ENCODE measurements at regions of chr19 and their contacts with region 1.

Region 1: GRCh38 chr19:43674596-43674995 is 4.6 kb upstream of the PLAUR start:
- DNase-seq: no peak
- ATAC-seq: no peak
- H3K4me3 ChIP-seq: no peak overlapping the region; the same call in 1 of the 2 replicates
- H3K27ac ChIP-seq: peak overlapping the region; percentile 99
- H3K4me1 ChIP-seq: peaks cover 29% of the 10 kb centered on the region
- H3K27me3 ChIP-seq: no peaks in the 10 kb centered on the region
- CTCF ChIP-seq: no peak

Region 2: GRCh38 chr19:43694553-43694952 is 20.0 kb after region 1 on chr19:
- CTCF ChIA-PET with region 1: no interaction called
- POLR2A ChIA-PET with region 1: interaction called, 13 read pairs
- intact Hi-C with region 1: no loop called
- DNase-seq: no peak
- ATAC-seq: peak; percentile 81
- H3K4me3 ChIP-seq: no peak overlapping the region
- H3K27ac ChIP-seq: no peak overlapping the region
- H3K4me1 ChIP-seq: peaks cover 8% of the 10 kb centered on the region; the same call in 1 of the 2 replicates
- H3K27me3 ChIP-seq: no peaks in the 10 kb centered on the region
- CTCF ChIP-seq: no peak

Measured in PC-3 (cell line).